ENCODE measurements at regions of chr17 and their contacts with region 1.

Region 1: GRCh38 chr17:5237541-5238016 is 2.9 kb upstream of the SCIMP start:
- DNase-seq: peak; percentile 72
- H3K4me3 ChIP-seq: no peak overlapping the region
- H3K27ac ChIP-seq: no peak overlapping the region
- H3K4me1 ChIP-seq: no peaks in the 10 kb centered on the region
- H3K27me3 ChIP-seq: no peaks in the 10 kb centered on the region
- CTCF ChIP-seq: peak; percentile 64
- EP300 ChIP-seq: no peak
- RAD21 ChIP-seq: peak; percentile 32

Region 2: GRCh38 chr17:5249615-5250014 is 12.0 kb after region 1 on chr17:
- CTCF ChIA-PET with region 1: interaction called, 14 read pairs
- POLR2A ChIA-PET with region 1: interaction called, 3 read pairs
- DNase-seq: peak; percentile 78
- H3K4me3 ChIP-seq: peak overlapping the region in 1 of 2 experiments; percentile 47; a peak in 1 of 4 replicates
- H3K27ac ChIP-seq: no peak overlapping the region
- H3K4me1 ChIP-seq: no peaks in the 10 kb centered on the region
- H3K27me3 ChIP-seq: no peaks in the 10 kb centered on the region
- CTCF ChIP-seq: peak; percentile 74
- EP300 ChIP-seq: no peak
- RAD21 ChIP-seq: peak; percentile 85

Region 3: DNA sequence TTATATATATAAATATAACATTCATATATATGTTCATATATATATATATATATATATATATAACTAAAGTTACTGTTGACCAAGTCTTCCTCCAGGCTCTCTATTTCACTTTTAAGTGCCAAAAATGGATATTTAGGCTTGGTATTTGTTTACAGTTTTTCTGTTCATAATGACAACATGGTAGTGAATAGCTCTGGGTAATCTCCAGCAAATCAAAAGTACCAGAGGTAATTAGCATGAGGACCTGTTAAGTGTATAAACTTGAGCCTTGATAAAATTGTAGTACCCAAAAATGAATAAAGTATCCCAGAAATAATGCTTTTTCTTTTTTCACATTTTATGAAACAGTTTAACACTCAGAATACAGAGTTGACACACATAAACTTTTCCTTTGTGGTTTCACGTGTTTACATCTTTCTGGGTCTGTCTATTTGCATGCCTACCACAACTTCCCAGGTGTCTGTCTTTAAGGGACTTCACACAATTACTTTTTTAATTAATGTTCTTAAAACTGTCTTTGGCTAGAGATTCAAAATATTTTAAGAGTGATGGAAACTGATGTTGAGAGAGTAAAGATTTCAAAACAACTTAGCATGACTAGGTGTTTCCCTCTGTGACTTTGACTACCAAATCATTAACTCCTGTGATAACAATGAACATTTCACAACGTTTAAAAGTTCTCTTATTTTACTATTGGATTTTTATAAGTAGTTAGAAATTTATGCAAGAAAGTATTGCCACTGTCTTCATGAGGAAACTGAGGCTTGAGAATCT is 92.4 kb after region 1 on chr17:
- CTCF ChIA-PET with region 1: no interaction called
- POLR2A ChIA-PET with region 1: no interaction called
- DNase-seq: no peak
- H3K4me3 ChIP-seq: no peak overlapping the region
- H3K27ac ChIP-seq: no peak overlapping the region
- H3K4me1 ChIP-seq: peaks cover 0 to 11% of the 10 kb centered on the region in 2 experiments; a peak in 1 of 4 replicates
- H3K27me3 ChIP-seq: no peaks in the 10 kb centered on the region
- CTCF ChIP-seq: no peak
- EP300 ChIP-seq: no peak
- RAD21 ChIP-seq: no peak

Region 4: DNA sequence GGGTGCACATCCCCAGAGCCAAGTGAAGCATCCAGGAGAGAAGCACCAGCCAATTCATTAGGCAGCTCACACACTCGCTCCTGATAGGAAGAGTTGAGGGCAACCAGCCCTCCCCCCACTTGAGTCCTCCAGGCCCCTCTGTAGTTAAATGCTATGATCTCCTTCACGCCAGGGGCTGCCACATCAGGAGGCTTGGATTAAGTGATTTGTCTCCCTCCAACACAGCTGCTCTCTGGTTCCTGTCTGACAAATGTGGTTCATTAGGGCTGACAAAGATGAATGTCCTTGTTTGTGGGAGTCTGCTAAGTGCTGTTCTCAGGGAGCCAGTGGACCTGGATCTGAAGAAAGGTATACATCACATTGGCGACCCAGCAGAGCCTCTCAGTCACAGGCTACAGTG is 738.1 kb after region 1 on chr17:
- CTCF ChIA-PET with region 1: no interaction called
- POLR2A ChIA-PET with region 1: no interaction called
- DNase-seq: no peak
- H3K4me3 ChIP-seq: no peak overlapping the region
- H3K27ac ChIP-seq: no peak overlapping the region
- H3K4me1 ChIP-seq: no peaks in the 10 kb centered on the region
- H3K27me3 ChIP-seq: no peaks in the 10 kb centered on the region
- CTCF ChIP-seq: no peak
- EP300 ChIP-seq: no peak
- RAD21 ChIP-seq: no peak

Measured in SK-N-SH (cell line).